Activated CD8-positive, alpha-beta T cell treated with anti-CD3 and anti-CD28 coated beads for 36 hours (primary cell): ENCODE measurements at regions of chr4 and their contacts with region 1.

Region 1: DNA sequence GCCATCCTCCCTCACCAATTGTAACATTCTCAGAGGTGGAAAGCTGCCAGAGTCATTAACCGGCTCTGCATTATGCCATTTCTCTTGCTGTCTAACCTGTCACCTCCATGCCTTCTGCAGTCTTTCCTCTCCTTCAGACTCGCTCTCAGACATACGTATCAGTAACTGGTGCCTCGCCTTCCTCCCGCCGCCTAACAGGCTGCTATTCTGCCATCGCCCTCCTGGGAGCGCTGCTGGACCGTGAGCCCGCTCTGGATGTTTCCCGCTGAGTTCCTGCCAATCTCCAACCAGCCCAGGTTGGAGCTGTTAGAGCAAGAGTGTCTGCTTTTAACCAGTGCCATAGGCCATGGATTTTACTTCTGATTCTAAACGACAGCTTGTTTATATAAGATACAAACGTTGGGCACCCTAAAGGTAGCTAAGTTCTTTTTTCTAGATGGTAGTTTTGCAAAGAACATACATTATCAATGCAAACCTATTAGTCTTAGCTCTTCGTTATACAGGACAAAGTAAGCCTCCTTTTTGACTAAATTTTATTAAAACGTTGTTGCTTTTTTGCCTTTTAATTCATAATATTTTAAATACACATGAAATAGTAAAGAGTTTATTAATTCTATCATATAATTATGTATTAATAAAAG is 59.5 kb upstream of the NEIL3 start:
- DNase-seq: peak; percentile 76
- ATAC-seq: peak; percentile 98
- H3K4me3 Mint-ChIP-seq: no peak overlapping the region
- H3K27ac Mint-ChIP-seq: no peak overlapping the region
- H3K4me1 Mint-ChIP-seq: peaks cover 9% of the 10 kb centered on the region
- H3K27me3 Mint-ChIP-seq: peaks cover 15% of the 10 kb centered on the region
- CTCF ChIP-seq: peak; percentile 98

Region 2: DNA sequence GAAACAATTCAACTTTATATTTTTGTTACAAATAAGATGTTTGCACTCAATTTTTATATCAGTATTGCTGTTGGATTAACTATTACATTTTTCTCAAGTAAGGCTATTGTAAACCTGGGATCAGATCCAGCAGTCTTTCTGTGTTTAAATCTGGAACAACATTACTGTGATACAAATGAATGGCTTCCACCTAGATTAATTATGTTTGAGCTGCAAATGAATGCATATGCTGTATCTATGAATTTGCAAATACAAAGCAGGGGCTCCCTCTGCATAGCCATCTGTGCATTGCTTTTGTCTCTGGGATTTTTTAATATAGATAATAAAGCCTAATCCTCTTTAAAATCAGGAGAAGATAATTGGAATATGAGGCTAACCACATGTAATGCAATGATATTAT is 10.3 kb before region 1 on chr4:
- CTCF ChIA-PET with region 1: interaction called, 10 read pairs
- POLR2A ChIA-PET with region 1: no interaction called
- intact Hi-C with region 1: no loop called
- DNase-seq: no peak
- ATAC-seq: no peak
- H3K4me3 Mint-ChIP-seq: no peak overlapping the region
- H3K27ac Mint-ChIP-seq: no peak overlapping the region
- H3K4me1 Mint-ChIP-seq: no peaks in the 10 kb centered on the region
- H3K27me3 Mint-ChIP-seq: no peaks in the 10 kb centered on the region
- CTCF ChIP-seq: no peak

Region 3: DNA sequence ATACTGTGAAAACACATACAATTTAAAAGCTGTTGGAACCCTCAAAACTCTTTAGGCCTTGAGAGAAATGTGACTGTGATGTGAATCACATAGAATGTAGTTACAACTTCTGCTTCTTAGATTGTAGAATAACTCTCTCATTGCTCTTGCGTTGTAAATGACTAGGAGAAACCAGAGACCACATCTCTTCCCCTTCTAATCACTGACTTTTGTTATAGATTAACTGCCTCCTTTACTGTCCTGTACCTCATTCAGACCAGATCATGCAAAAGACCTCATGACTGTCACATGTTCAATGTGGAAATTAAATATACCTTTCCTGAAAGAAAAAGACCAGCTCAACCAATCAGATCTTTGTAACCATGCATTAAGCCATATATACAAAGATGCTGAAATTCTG is 16.3 kb after region 1 on chr4:
- CTCF ChIA-PET with region 1: interaction called, 25 read pairs
- POLR2A ChIA-PET with region 1: no interaction called
- intact Hi-C with region 1: no loop called
- DNase-seq: no peak
- ATAC-seq: no peak
- H3K4me3 Mint-ChIP-seq: no peak overlapping the region
- H3K27ac Mint-ChIP-seq: no peak overlapping the region
- H3K4me1 Mint-ChIP-seq: no peaks in the 10 kb centered on the region
- H3K27me3 Mint-ChIP-seq: no peaks in the 10 kb centered on the region
- CTCF ChIP-seq: no peak

Region 4: DNA sequence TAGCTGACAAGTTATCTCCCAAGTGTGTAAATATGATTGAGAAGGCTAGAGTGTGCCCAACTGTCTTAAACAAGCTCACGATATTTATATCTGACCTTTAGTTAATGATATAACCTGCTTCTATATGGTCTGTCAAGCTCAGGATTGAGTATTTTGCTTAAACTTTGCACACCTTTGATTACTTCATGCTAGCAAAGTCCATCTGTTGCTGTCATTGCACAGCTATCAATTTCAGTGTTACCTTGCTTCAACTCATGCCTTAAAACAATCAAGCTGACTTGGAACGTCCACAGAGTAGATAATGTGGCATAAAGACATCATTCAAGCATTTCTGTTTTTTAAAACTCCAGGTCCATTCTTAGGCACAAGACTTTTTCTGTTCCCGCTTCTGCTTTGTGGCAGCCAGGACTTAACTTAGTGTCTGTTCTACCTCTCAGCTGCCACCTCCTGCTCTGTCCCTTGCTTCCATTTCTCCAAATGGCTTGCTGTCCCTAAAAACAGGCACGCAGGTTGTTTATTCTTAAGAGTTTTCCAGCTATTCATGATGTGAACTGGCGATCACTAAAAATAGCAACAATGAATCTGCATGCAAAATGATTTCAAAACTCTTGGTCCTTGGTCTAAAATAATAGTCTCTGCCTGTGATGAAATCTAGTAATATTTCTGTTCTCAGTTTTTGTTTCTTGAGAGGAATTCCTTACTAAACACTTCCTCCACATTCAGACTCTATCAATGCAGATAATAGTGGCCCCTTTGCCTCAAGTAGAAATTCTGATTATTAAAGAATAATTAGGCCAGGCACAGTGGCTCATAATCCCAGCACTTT is 43.2 kb after region 1 on chr4:
- CTCF ChIA-PET with region 1: interaction called, 12 read pairs
- POLR2A ChIA-PET with region 1: no interaction called
- intact Hi-C with region 1: no loop called
- DNase-seq: no peak
- ATAC-seq: no peak
- H3K4me3 Mint-ChIP-seq: no peak overlapping the region
- H3K27ac Mint-ChIP-seq: no peak overlapping the region
- H3K4me1 Mint-ChIP-seq: no peaks in the 10 kb centered on the region
- H3K27me3 Mint-ChIP-seq: no peaks in the 10 kb centered on the region
- CTCF ChIP-seq: no peak

Region 5: DNA sequence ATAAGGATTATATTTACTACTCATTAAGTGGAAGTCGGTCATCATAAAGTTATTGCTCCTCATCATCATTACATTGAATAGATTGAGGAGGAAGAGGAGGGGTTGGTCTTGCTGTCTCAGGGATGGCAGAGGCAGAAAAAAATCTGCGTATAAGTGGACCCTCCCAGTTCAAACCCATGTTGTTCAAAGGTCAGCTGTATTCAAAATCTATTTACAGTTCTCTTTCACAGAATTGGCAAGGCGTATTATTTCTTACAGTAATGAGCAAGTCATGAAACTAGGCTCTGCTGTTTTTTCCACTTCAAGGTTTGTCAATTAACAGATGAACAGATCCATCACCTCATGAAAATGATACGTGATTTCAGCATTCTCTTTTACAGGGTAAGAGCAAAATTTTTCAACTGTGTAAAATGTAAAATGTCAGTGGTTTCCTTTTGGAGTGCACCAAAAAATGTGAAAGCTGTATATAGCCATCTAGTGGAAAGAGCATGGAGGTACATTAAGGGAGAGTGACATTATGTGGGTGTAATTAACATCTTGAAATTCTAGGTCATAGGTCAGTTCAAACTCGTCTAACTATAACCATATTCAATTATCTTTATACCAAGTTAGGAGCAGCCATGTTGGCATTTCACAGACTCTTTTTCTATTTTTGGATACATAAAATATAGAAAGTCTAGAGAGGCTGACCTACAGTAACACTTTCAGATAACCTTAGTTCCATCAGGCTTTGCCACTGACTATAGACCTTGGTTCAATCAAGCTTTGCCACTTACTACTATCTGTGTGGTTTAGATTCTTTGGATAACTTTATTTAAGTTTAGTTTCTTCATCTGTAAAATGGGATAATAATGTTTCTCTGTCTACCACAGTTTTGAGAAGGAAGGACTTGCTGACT is 89.5 kb after region 1 on chr4:
- CTCF ChIA-PET with region 1: interaction called, 31 read pairs
- POLR2A ChIA-PET with region 1: no interaction called
- intact Hi-C with region 1: loop called (anchors 1 kb)
- DNase-seq: no peak
- ATAC-seq: peak; percentile 93
- H3K4me3 Mint-ChIP-seq: no peak overlapping the region
- H3K27ac Mint-ChIP-seq: peak overlapping the region; percentile 15
- H3K4me1 Mint-ChIP-seq: peaks cover 6% of the 10 kb centered on the region
- H3K27me3 Mint-ChIP-seq: no peaks in the 10 kb centered on the region
- CTCF ChIP-seq: peak; percentile 73

Region 6: GRCh38 chr4:177356206-177356605 is 106.0 kb after region 1 on chr4:
- CTCF ChIA-PET with region 1: interaction called, 10 read pairs
- POLR2A ChIA-PET with region 1: no interaction called
- intact Hi-C with region 1: no loop called
- DNase-seq: no peak
- ATAC-seq: no peak
- H3K4me3 Mint-ChIP-seq: no peak overlapping the region
- H3K27ac Mint-ChIP-seq: no peak overlapping the region
- H3K4me1 Mint-ChIP-seq: no peaks in the 10 kb centered on the region
- H3K27me3 Mint-ChIP-seq: no peaks in the 10 kb centered on the region
- CTCF ChIP-seq: no peak

Region 7: DNA sequence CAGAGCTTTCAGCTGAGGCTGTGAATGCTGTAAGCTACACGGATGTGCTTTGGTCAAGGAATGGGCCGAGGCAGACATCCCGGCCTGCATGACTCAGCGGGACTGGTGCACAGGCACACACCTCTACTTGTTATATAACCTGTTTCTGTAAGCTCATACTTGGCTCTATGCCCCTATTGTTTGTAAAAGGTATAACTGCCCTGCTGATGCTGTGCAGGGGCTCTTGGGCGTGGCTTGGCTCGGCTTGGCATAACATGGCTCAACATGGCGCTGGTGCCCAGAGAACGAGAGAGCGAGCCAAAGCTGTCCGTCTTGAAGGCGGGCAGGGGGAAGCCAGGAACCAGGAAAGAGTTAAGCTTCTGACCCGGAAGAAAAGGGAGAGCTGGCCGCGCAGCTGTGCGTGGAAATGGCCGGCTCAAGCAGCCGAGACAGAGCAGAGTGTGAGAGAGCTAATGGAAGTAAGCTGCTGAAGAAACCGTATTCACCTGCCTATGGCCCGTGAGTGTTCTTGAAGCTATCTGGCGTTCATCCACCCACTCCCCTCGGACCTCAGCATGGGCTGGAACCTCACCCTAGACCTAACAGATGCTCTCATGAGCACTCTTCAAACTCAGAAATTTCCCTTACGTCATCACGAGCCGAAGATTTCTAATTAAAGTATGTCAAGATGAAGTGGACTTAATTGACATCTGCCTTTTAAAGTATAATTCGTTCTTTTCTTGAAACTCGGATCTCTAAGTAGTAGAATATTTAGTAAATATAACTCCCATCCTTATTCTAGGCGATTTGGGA is 478.4 kb after region 1 on chr4:
- CTCF ChIA-PET with region 1: no interaction called
- POLR2A ChIA-PET with region 1: no interaction called
- intact Hi-C with region 1: no loop called
- DNase-seq: no peak
- ATAC-seq: no peak
- H3K4me3 Mint-ChIP-seq: no peak overlapping the region
- H3K27ac Mint-ChIP-seq: no peak overlapping the region
- H3K4me1 Mint-ChIP-seq: no peaks in the 10 kb centered on the region
- H3K27me3 Mint-ChIP-seq: no peaks in the 10 kb centered on the region
- CTCF ChIP-seq: no peak